ENCODE measurements at regions of chr6 and their contacts with region 1.

Region 1: GRCh38 chr6:15776458-15776980 is 113.7 kb upstream of the DTNBP1 start:
- DNase-seq: no peak
- ATAC-seq: no peak
- H3K4me3 ChIP-seq: no peak overlapping the region
- H3K27ac ChIP-seq: no peak overlapping the region
- H3K4me1 ChIP-seq: no peaks in the 10 kb centered on the region
- H3K27me3 ChIP-seq: peaks cover 4% of the 10 kb centered on the region
- CTCF ChIP-seq: no peak

Region 2: GRCh38 chr6:15832841-15833240 is 56.3 kb after region 1 on chr6:
- intact Hi-C with region 1: loop called (anchors 5 kb)
- DNase-seq: no peak
- ATAC-seq: no peak
- H3K4me3 ChIP-seq: no peak overlapping the region
- H3K27ac ChIP-seq: no peak overlapping the region
- H3K4me1 ChIP-seq: no peaks in the 10 kb centered on the region
- H3K27me3 ChIP-seq: no peaks in the 10 kb centered on the region
- CTCF ChIP-seq: no peak